Lower lobe of right lung (tissue), 2 donors: ENCODE measurements at regions of chr2 and their contacts with region 1.

Region 1: DNA sequence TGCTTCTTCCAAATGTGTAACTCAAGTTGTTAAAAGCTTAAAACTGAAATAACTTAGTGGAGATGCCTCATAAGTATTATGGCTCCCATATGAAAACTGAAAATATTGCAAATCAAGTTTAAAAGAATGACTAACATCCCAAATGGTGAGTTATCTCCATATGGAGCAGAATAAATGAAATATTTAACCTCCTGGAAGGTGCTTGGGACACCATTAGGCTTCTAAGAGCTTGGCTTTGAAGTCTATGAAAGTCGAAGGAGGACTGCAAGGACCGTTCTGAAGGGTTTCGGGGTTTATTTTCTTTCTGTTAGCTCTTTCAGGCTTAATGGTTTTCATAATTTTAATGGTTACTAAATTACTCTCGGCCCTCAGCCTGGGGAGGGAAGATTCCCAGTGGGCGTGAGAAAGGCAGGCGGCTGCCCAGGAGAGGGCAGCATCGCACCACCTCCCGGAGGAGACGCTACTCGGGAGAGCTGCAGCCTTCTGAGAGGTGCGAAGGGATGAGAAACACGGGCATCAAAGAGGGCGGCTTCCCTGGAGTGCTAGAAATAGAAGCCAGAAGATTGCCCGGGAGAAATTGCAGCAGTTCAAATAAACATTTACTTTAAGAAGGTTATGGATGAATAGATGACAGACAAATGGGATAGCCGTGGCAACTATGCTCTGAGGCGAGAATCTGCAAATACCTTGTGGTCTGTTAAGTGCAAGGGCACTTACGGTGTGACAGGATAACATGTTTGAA is 43.1 kb downstream of the MAP3K19 start:
- DNase-seq: peak; percentile 73
- ATAC-seq: peak; percentile 95 to 97
- H3K4me3 ChIP-seq: no peak overlapping the region
- H3K27ac ChIP-seq: no peak overlapping the region
- H3K4me1 ChIP-seq: peaks cover 5% of the 10 kb centered on the region
- H3K27me3 ChIP-seq: peaks cover 6% of the 10 kb centered on the region
- CTCF ChIP-seq: peak; percentile 92

Region 2: DNA sequence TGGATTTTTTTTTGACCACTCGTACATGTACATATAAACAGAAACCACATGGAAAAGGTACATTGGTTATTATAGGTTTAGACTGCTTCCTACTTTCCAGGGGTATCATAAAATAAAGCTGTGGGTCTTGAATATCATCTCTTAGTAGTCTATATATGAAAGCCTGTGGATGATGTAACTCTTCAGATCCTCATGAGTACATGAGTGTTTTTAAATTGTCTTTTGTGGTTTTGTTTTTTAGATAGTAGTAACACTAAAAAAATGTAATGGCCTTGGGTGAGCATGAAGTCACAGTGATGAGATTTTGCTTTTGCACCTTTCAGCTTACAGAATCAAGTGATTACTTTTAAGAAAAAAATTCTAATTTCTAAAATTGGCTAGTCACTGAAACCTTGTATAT is 128.1 kb after region 1 on chr2:
- intact Hi-C with region 1: no loop called
- DNase-seq: no peak
- ATAC-seq: no peak
- H3K4me3 ChIP-seq: no peak overlapping the region
- H3K27ac ChIP-seq: no peak overlapping the region
- H3K4me1 ChIP-seq: no peaks in the 10 kb centered on the region
- H3K27me3 ChIP-seq: no peaks in the 10 kb centered on the region
- CTCF ChIP-seq: no peak

Region 3: GRCh38 chr2:135709992-135710391 is 705.8 kb after region 1 on chr2:
- intact Hi-C with region 1: loop called (anchors 10 kb)
- DNase-seq: peak; percentile 54
- ATAC-seq: peak; percentile 77 to 83
- H3K4me3 ChIP-seq: no peak overlapping the region
- H3K27ac ChIP-seq: no peak overlapping the region
- H3K4me1 ChIP-seq: no peaks in the 10 kb centered on the region
- H3K27me3 ChIP-seq: no peaks in the 10 kb centered on the region
- CTCF ChIP-seq: peak; percentile 94